G401 (cell line): ENCODE measurements at regions of chr2 and their contacts with region 1.

Region 1: DNA sequence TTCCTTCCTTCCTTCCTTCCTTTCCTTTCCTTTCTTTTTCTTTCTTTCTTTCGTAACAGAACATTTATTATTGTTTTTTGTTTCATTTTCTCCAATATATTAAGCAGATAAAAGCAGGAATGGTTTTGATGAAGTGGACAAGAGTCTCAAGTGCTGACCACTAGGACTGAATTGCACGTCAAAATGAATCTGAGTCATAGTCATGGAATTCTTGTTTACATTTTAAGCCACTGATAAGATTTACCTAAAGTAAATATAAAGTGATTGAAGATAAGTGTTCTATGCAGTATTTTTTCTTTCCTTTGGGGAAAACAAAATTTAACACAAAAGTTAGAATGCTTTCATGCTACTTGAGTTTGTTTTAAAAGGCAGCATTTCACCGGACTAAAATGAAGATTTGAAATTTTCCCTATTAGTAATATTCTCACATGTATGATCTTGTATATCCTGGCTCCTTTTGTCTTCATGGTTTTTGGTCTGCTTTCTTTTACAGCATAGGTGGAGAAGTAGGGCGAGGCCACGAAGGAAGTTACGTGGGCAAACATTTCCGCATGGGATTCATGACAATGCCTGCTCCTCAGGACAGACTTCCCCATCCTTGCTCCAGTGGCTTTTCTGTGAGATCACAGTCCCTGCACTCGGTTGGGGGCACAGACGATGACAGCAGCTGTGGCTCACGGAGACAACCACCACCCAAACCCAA is 113.5 kb downstream of the NYAP2 start:
- DNase-seq: no peak

Region 2: DNA sequence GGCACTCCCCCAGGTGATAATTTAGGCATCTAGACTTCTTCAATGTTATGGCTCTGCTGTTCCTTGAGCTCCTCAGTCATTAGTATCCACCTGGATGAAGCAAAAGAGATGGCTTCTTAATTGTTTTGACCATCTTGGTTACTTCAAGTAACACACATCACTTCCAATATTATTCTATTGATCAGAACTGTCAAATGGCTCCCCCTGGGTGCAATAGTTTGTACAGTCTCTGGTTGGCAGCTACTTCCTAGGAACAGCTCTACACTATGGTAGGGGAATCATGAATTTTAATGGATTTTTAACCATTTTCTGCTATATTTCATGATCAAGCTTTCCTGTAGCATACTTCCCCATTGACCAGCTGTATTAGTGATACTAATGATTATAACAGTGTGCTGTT is 43.4 kb after region 1 on chr2:
- in situ Hi-C with region 1: loop called (anchors 5 kb)
- DNase-seq: no peak